ENCODE measurements at regions of chr1 and their contacts with region 1.

Region 1: GRCh38 chr1:216531263-216532239 is 108.3 kb upstream of the USH2A start:
- DNase-seq: no peak
- ATAC-seq: peak; percentile 65; the same call in 1 of the 2 replicates
- H3K4me3 ChIP-seq: peak overlapping the region; percentile 46 to 49
- H3K27ac ChIP-seq: 0 out of 2 replicates have a peak overlapping the region, but pooled peaks have one; percentile 39
- H3K4me1 ChIP-seq: no peaks in the 10 kb centered on the region; the same call in 1 of the 2 replicates
- H3K27me3 ChIP-seq: no peaks in the 10 kb centered on the region
- CTCF ChIP-seq: no peak

Region 2: GRCh38 chr1:216270086-216270773 is 261.3 kb before region 1 on chr1:
- CTCF ChIA-PET with region 1: no interaction called
- POLR2A ChIA-PET with region 1: no interaction called
- in situ Hi-C with region 1: no loop called
- intact Hi-C with region 1: no loop called
- DNase-seq: no peak
- ATAC-seq: no peak
- H3K4me3 ChIP-seq: no peak overlapping the region
- H3K27ac ChIP-seq: no peak overlapping the region
- H3K4me1 ChIP-seq: no peaks in the 10 kb centered on the region
- H3K27me3 ChIP-seq: no peaks in the 10 kb centered on the region
- CTCF ChIP-seq: no peak

Region 3: DNA sequence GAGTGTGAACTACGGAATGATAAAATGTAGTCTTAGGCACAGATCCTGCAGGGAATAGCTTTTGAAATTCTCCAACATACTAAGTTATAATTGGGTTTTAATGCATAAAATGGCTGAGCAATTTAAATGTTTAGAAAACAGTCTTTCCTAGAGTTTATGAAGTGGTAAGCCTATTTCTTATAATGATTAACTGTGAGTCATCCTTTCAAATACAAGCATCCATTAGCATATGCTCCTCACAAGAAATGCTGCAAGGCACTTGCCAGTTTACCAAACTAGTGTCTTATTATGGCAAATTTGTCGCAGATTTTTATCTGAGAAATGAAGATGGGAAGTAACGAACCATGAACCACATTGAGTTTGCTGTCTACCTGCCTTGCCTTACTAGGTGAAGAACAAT is 293.0 kb after region 1 on chr1:
- CTCF ChIA-PET with region 1: interaction called, 16 read pairs
- POLR2A ChIA-PET with region 1: no interaction called
- in situ Hi-C with region 1: no loop called
- intact Hi-C with region 1: no loop called
- DNase-seq: no peak
- ATAC-seq: no peak
- H3K4me3 ChIP-seq: no peak overlapping the region
- H3K27ac ChIP-seq: no peak overlapping the region
- H3K4me1 ChIP-seq: no peaks in the 10 kb centered on the region
- H3K27me3 ChIP-seq: no peaks in the 10 kb centered on the region
- CTCF ChIP-seq: no peak

Measured in Panc1 (cell line).